Psoas muscle (tissue), 8 donors: ENCODE measurements at regions of chr17 and their contacts with region 1.

Region 1: GRCh38 chr17:17675925-17676534 is 5.2 kb upstream of the RAI1 start:
- DNase-seq: peak in 1 of 2 donors; percentile 10
- ATAC-seq: no peak
- H3K4me3 ChIP-seq: no peak overlapping the region
- H3K27ac ChIP-seq: no peak overlapping the region
- H3K4me1 ChIP-seq: peaks cover 9% of the 10 kb centered on the region
- H3K27me3 ChIP-seq: no peaks in the 10 kb centered on the region
- CTCF ChIP-seq: no peak

Region 2: GRCh38 chr17:17859909-17860765 is 184.1 kb after region 1 on chr17:
- intact Hi-C with region 1: loop called (anchors 2 to 5 kb)
- DNase-seq: peak; percentile 65 to 83
- ATAC-seq: peak; percentile 92 to 97 (median 93)
- H3K4me3 ChIP-seq: no peak overlapping the region
- H3K27ac ChIP-seq: peak overlapping the region; percentile 5
- H3K4me1 ChIP-seq: peaks cover 4% of the 10 kb centered on the region
- H3K27me3 ChIP-seq: no peaks in the 10 kb centered on the region
- CTCF ChIP-seq: peak; percentile 94

Region 3: DNA sequence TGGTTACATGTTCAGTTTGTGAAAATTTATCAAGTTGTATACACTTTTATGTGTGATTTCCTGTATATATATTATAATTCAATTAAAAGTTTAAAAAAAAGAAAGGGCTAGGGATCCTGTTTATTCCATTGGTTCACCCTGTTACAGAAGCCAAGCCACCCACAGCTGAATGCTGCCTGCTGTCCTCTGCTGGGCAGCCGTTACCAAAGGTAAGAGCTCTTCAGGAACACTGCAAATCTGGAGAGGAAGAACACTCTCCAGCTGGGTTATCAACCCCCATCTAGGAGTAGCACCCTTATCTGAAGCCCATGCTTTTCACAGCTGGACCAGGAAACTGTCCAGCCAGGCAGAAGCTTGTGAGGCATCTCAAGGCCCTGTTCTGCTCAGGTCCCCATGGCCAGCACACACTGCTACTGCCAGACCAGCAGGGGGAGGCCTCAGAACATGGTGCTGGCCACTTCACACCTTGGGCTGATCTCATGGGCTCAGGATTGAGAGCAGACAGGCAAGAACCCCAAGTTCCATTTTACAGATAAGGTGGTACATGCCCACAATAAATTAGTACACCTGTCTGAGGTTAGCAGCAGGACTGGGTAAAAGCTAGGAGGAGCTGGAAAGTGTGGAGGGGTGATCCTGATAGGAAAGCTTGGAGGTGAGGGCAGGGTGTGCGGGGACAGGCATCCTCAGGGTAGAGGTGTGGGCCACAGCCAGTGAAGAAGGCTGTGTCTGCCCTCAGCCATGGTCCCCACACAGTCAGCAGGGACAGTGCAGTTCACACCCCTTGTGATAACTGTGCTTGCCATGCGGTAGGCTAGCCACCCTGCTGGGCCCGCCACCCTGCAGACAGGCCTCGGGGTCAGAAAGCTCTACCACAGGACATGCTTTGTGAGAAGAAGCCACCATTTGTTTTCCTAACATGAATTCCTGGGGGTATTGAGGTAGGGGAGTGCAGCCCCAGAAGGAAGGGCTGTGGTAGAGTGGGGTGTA is 215.0 kb after region 1 on chr17:
- intact Hi-C with region 1: no loop called
- DNase-seq: peak; percentile 34 to 59
- ATAC-seq: peak; percentile 50 to 85 (median 76)
- H3K4me3 ChIP-seq: no peak overlapping the region
- H3K27ac ChIP-seq: no peak overlapping the region
- H3K4me1 ChIP-seq: peaks cover 9% of the 10 kb centered on the region
- H3K27me3 ChIP-seq: no peaks in the 10 kb centered on the region
- CTCF ChIP-seq: peak; percentile 69